IMR-90 (cell line): ENCODE measurements at regions of chr16 and their contacts with region 1.

Region 1: GRCh38 chr16:86697715-86698114 is 119.4 kb downstream of the FOXL1 start:
- DNase-seq: peak; percentile 49
- ATAC-seq: peak; percentile 32; the same call in 1 of the 2 replicates
- H3K4me3 ChIP-seq: no peak overlapping the region
- H3K27ac ChIP-seq: no peak overlapping the region
- H3K4me1 ChIP-seq: no peaks in the 10 kb centered on the region
- H3K27me3 ChIP-seq: peaks cover 7% of the 10 kb centered on the region
- CTCF ChIP-seq: no peak
- POLR2A ChIP-seq: no peak
- RAD21 ChIP-seq: no peak

Region 2: GRCh38 chr16:86823895-86824671 is 126.4 kb after region 1 on chr16:
- CTCF ChIA-PET with region 1: no interaction called
- POLR2A ChIA-PET with region 1: no interaction called
- dilution Hi-C with region 1: no loop called
- in situ Hi-C with region 1: no loop called
- intact Hi-C with region 1: no loop called
- DNase-seq: peak; percentile 74
- ATAC-seq: no peak
- H3K4me3 ChIP-seq: no peak overlapping the region
- H3K27ac ChIP-seq: no peak overlapping the region
- H3K4me1 ChIP-seq: peaks cover 2% of the 10 kb centered on the region; the same call in 1 of the 2 replicates
- H3K27me3 ChIP-seq: peaks cover 40% of the 10 kb centered on the region
- CTCF ChIP-seq: no peak
- POLR2A ChIP-seq: no peak
- RAD21 ChIP-seq: no peak

Region 3: GRCh38 chr16:86882586-86883280 is 185.0 kb after region 1 on chr16:
- CTCF ChIA-PET with region 1: no interaction called
- POLR2A ChIA-PET with region 1: interaction called, 11 read pairs
- dilution Hi-C with region 1: no loop called
- in situ Hi-C with region 1: no loop called
- intact Hi-C with region 1: no loop called
- DNase-seq: peak; percentile 88
- ATAC-seq: peak; percentile 85
- H3K4me3 ChIP-seq: no peak overlapping the region
- H3K27ac ChIP-seq: no peak overlapping the region
- H3K4me1 ChIP-seq: peaks cover 5% of the 10 kb centered on the region
- H3K27me3 ChIP-seq: peaks cover 6% of the 10 kb centered on the region; the same call in 1 of the 2 replicates
- CTCF ChIP-seq: no peak
- POLR2A ChIP-seq: no peak
- RAD21 ChIP-seq: peak; percentile 27

Region 4: GRCh38 chr16:86961171-86961601 is 263.5 kb after region 1 on chr16:
- CTCF ChIA-PET with region 1: no interaction called
- POLR2A ChIA-PET with region 1: no interaction called
- dilution Hi-C with region 1: no loop called
- in situ Hi-C with region 1: no loop called
- intact Hi-C with region 1: no loop called
- DNase-seq: peak; percentile 72
- ATAC-seq: peak; percentile 83
- H3K4me3 ChIP-seq: no peak overlapping the region
- H3K27ac ChIP-seq: no peak overlapping the region
- H3K4me1 ChIP-seq: peaks cover 10% of the 10 kb centered on the region
- H3K27me3 ChIP-seq: peaks cover 6% of the 10 kb centered on the region; the same call in 1 of the 2 replicates
- CTCF ChIP-seq: no peak
- POLR2A ChIP-seq: no peak
- RAD21 ChIP-seq: no peak